PC-3 (cell line): ENCODE measurements at regions of chr6 and their contacts with region 1.

Region 1: GRCh38 chr6:154386848-154387717 is 30.5 kb upstream of the IPCEF1 start:
- DNase-seq: peak; percentile 89
- ATAC-seq: peak; percentile 91
- H3K4me3 ChIP-seq: no peak overlapping the region
- H3K27ac ChIP-seq: peak overlapping the region; percentile 23
- H3K4me1 ChIP-seq: peaks cover 15% of the 10 kb centered on the region
- H3K27me3 ChIP-seq: no peaks in the 10 kb centered on the region
- CTCF ChIP-seq: no peak

Region 2: GRCh38 chr6:154197196-154197860 is 189.8 kb before region 1 on chr6:
- CTCF ChIA-PET with region 1: no interaction called
- POLR2A ChIA-PET with region 1: no interaction called
- intact Hi-C with region 1: loop called (anchors 1 kb)
- DNase-seq: peak; percentile 66
- ATAC-seq: peak; percentile 78
- H3K4me3 ChIP-seq: no peak overlapping the region
- H3K27ac ChIP-seq: peak overlapping the region; percentile 26; the same call in 1 of the 2 replicates
- H3K4me1 ChIP-seq: peaks cover 13% of the 10 kb centered on the region
- H3K27me3 ChIP-seq: no peaks in the 10 kb centered on the region
- CTCF ChIP-seq: no peak

Region 3: GRCh38 chr6:154292890-154293398 is 94.1 kb before region 1 on chr6:
- CTCF ChIA-PET with region 1: no interaction called
- POLR2A ChIA-PET with region 1: no interaction called
- intact Hi-C with region 1: loop called (anchors 1 kb)
- DNase-seq: peak; percentile 88
- ATAC-seq: peak; percentile 84
- H3K4me3 ChIP-seq: peak overlapping the region; percentile 47
- H3K27ac ChIP-seq: peak overlapping the region; percentile 91
- H3K4me1 ChIP-seq: peaks cover 42% of the 10 kb centered on the region
- H3K27me3 ChIP-seq: no peaks in the 10 kb centered on the region
- CTCF ChIP-seq: no peak